Left lung (tissue), 14 donors: ENCODE measurements at regions of chr5 and their contacts with region 1.

Region 1: GRCh38 chr5:129771058-129771838 is 23.4 kb downstream of the MINAR2 start:
- DNase-seq: peak in 2 of 4 donors; percentile 42 to 61
- ATAC-seq: peak; percentile 88
- H3K4me3 ChIP-seq: no peak overlapping the region
- H3K27ac ChIP-seq: no peak overlapping the region
- H3K4me1 ChIP-seq: no peaks in the 10 kb centered on the region
- H3K27me3 ChIP-seq: no peaks in the 10 kb centered on the region
- CTCF ChIP-seq: peak; percentile 67 to 68

Region 2: DNA sequence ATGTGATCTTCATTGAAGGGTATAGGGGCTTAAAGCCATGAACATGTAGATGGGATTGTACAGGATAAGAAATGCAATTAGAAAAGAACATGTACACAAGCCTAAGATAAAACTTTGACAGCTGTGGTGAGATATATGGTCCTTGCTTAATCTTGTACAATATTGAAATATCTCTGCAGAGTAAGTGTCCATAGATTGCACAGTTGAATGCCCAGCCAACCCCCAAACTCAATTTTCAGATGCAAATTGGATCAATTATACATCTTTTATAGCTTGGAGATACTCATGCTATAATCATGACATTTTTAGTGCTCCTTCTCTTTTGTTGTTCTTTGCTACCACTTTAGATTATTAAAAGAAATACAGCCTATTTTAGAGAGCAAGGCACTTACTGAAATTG is 73.5 kb after region 1 on chr5:
- intact Hi-C with region 1: loop called in 1 of 2 experiments (anchors 10 kb)
- DNase-seq: no peak
- ATAC-seq: no peak
- H3K4me3 ChIP-seq: no peak overlapping the region
- H3K27ac ChIP-seq: no peak overlapping the region
- H3K4me1 ChIP-seq: no peaks in the 10 kb centered on the region
- H3K27me3 ChIP-seq: no peaks in the 10 kb centered on the region
- CTCF ChIP-seq: no peak